ENCODE measurements at regions of chr6 and their contacts with region 1.

Region 1: DNA sequence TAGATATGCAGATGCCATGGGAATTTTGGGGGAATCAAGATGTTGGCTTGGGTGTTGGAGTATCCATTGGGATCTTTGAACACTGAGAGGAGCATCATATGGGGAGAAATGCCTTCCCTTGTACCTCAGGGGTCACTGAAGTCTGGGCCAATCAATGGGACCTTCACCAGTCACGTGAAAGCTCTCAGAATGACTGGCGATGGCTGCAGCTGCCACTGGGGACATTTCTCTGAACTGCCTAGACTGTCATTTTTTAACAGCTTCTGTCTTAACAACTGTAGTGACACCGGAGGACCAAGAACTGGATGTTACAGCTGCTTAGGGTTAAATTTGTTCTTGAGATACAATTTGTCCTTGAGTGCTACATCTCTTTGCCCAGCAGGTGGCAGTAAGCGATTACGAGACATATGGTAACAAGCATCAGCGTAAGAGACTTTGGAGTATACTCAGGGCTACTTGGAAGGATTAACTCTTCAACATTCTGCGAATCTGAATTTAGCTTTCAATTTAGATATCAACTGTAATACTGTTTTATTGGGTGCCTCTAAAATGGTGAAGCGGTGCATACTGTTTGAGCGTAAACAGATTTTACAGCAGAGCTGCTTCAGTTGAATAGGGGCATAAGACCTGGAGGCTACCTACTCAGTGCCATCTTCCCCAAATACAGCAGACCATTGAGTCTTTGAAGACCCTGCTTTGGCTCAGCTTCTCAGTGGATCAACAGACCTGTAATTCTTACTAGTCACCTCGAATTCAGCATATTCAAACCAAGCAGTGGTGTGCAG is 36.0 kb downstream of the CCN2 start:
- DNase-seq: peak; percentile 56 to 84 (median 74)
- H3K4me3 ChIP-seq: no peak overlapping the region
- H3K27ac ChIP-seq: no peak overlapping the region
- H3K4me1 ChIP-seq: no peaks in the 10 kb centered on the region
- H3K27me3 ChIP-seq: no peaks in the 10 kb centered on the region
- CTCF ChIP-seq: peak; percentile 69 to 82 (median 78)
- POLR2A ChIP-seq: no peak

Region 2: GRCh38 chr6:132219901-132220300 is 304.7 kb after region 1 on chr6:
- intact Hi-C with region 1: loop called in 1 of 2 experiments (anchors 5 kb)
- DNase-seq: no peak
- H3K4me3 ChIP-seq: no peak overlapping the region
- H3K27ac ChIP-seq: no peak overlapping the region
- H3K4me1 ChIP-seq: no peaks in the 10 kb centered on the region
- H3K27me3 ChIP-seq: no peaks in the 10 kb centered on the region
- CTCF ChIP-seq: no peak
- POLR2A ChIP-seq: no peak

Region 3: GRCh38 chr6:132365281-132365907 is 450.2 kb after region 1 on chr6:
- intact Hi-C with region 1: no loop called
- DNase-seq: peak in 2 of 7 donors; percentile 18 to 55
- H3K4me3 ChIP-seq: no peak overlapping the region
- H3K27ac ChIP-seq: peak overlapping the region in 2 of 5 donors; percentile 7 to 31
- H3K4me1 ChIP-seq: peaks cover 8 to 21% of the 10 kb centered on the region in 2 donors
- H3K27me3 ChIP-seq: no peaks in the 10 kb centered on the region
- CTCF ChIP-seq: no peak
- POLR2A ChIP-seq: no peak

Measured in adrenal gland (tissue), 19 donors.